Activated CD4-positive, alpha-beta T cell treated with anti-CD3 and anti-CD28 coated beads, Interleukin-2, amount 10 ng/mL, durations not matched to agents 24 days and 14 days (primary cell): ENCODE measurements at regions of chr1 and their contacts with region 1.

Region 1: DNA sequence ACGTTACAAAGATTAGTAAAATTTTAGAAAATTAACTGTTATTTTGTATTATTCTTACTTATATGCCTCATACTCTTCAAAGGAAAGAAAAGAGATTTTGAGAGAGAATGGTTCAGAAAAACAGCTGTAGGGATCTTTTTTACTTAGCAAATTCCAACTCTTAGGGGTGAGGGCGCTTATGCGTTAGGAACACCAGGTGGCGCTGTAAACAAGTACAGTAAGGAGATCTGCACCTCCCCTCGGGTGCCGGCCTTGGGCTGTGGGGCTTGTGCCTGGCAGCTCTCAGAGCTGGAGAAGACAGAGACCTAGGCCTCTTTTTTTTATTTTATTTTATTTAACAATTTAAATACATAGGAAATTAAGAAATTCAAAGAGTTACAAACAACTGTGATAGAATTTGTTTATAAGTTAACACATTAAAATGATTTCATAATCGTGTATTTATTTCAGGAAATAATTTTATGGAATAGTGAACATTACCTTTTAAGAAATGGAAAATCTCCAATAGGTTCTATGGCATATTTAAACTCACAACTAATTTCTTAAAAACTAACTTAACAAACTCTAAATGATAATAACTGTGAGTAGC is 32.6 kb downstream of the UTP25 start:
- DNase-seq: peak; percentile 90
- H3K4me3 Mint-ChIP-seq: no peak overlapping the region
- H3K27ac Mint-ChIP-seq: no peak overlapping the region
- H3K4me1 Mint-ChIP-seq: no peaks in the 10 kb centered on the region
- H3K27me3 Mint-ChIP-seq: peaks cover 24% of the 10 kb centered on the region

Region 2: GRCh38 chr1:209805875-209806760 is 54.3 kb before region 1 on chr1 and contains the start of gene IRF6:
- intact Hi-C with region 1: no loop called
- DNase-seq: peak; percentile 71
- H3K4me3 Mint-ChIP-seq: peak within 1 kb of the TSS; percentile 66
- H3K27ac Mint-ChIP-seq: no peak within 1 kb of the TSS
- H3K4me1 Mint-ChIP-seq: peaks cover 14% of the 10 kb centered on the region
- H3K27me3 Mint-ChIP-seq: peaks cover 11% of the 10 kb centered on the region
- total RNA-seq, gene IRF6: 0.07 TPM in 1 of 2 replicates, not detected in the other

Region 3: GRCh38 chr1:209989525-209989924 is 129.1 kb after region 1 on chr1:
- intact Hi-C with region 1: loop called (anchors 1 kb)
- DNase-seq: no peak
- H3K4me3 Mint-ChIP-seq: no peak overlapping the region
- H3K27ac Mint-ChIP-seq: no peak overlapping the region
- H3K4me1 Mint-ChIP-seq: no peaks in the 10 kb centered on the region
- H3K27me3 Mint-ChIP-seq: peaks cover 7% of the 10 kb centered on the region

Region 4: GRCh38 chr1:210311726-210312493 is 451.5 kb after region 1 on chr1:
- intact Hi-C with region 1: loop called (anchors 1 kb)
- DNase-seq: no peak
- H3K4me3 Mint-ChIP-seq: peak overlapping the region; percentile 76
- H3K27ac Mint-ChIP-seq: no peak overlapping the region
- H3K4me1 Mint-ChIP-seq: peaks cover 4% of the 10 kb centered on the region
- H3K27me3 Mint-ChIP-seq: peaks cover 32% of the 10 kb centered on the region

Region 5: GRCh38 chr1:210709701-210710100 is 849.3 kb after region 1 on chr1:
- intact Hi-C with region 1: no loop called
- DNase-seq: no peak
- H3K4me3 Mint-ChIP-seq: no peak overlapping the region
- H3K27ac Mint-ChIP-seq: no peak overlapping the region
- H3K4me1 Mint-ChIP-seq: no peaks in the 10 kb centered on the region
- H3K27me3 Mint-ChIP-seq: no peaks in the 10 kb centered on the region